ENCODE measurements at regions of chr6 and their contacts with region 1.

Region 1: DNA sequence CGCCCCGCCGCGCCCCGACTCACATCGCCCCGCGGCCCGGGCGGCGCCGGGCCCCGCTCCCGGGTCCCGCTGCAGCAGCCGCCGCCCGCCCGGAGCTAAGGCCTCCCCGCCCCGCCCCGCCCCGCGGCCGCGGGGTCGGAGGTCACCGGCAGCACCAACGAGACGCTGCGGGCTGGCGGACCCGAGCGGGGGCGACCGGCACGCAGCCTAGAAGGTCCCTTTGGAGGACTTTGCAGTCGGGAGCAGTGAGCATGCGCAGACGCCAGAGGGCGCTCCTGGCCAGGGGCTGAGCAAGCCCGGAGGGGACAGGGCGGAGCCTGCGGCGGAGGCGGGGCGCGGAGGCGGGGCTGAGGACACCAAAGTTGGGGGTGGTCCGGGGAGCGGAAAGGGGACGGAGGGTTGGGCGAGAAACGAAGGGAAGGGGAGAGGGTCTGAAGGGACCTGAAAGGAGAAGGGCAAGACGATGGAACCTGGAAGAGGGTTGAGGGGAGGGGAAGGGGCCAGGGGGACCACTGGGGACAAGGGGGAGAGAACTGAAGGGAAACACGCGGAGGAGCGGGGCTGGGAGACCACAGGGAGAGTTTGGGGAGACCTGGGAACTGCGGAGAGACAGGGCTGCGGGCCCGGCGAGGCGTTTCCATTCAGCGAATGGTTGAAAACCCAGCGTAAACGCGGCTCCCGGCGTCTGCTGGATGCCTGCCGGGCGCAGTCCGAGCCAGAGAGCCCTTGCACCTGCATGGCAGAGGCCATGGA is at the start of gene FRS3:
- DNase-seq: peak; percentile 99
- H3K4me3 Mint-ChIP-seq: peak within 1 kb of the TSS; percentile 94
- H3K27ac Mint-ChIP-seq: peak within 1 kb of the TSS; percentile 83
- H3K4me1 Mint-ChIP-seq: peaks cover 19% of the 10 kb centered on the region
- H3K27me3 Mint-ChIP-seq: peaks cover 14% of the 10 kb centered on the region
- total RNA-seq, gene FRS3: 5.2 and 5.3 TPM in 2 replicates

Region 2: DNA sequence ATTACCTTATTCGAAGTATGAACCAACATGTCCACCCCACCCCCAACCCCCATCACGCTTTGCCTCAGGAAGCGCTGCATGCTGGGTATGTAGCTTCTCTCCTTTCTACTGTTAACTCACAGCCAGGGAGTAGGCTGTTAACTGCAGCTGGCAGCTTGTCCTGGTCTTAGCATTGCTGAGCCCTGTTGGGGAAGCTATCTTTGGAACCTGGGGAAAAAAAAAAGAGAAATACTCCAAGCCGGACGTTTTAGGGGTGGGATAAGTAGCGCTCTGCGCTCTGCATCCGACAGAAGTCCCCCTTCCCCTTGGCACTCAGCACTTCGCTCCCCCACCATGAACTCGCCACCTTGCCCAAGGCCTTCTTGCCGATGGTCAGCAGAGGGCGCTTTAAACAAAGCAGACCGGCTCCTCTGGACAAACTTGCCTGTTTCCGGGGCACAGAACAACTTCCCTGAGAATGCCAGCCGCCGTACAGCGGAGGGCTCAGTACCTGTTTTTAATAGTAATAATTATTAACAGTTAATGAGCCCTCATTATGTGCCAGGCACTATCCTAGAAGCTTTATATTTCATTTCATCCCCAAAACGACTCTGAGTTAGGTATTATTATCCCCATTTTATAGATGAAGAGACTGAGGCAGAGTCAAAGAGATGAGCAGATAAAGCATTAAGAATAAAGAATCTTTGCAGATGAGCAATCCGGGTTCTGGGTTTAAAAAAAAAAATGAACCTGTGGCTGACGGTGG is 176.9 kb before region 1 on chr6:
- intact Hi-C with region 1: loop called (anchors 1 kb)
- DNase-seq: peak; percentile 68
- H3K4me3 Mint-ChIP-seq: no peak overlapping the region
- H3K27ac Mint-ChIP-seq: no peak overlapping the region
- H3K4me1 Mint-ChIP-seq: peaks cover 6% of the 10 kb centered on the region
- H3K27me3 Mint-ChIP-seq: peaks cover 7% of the 10 kb centered on the region

Region 3: DNA sequence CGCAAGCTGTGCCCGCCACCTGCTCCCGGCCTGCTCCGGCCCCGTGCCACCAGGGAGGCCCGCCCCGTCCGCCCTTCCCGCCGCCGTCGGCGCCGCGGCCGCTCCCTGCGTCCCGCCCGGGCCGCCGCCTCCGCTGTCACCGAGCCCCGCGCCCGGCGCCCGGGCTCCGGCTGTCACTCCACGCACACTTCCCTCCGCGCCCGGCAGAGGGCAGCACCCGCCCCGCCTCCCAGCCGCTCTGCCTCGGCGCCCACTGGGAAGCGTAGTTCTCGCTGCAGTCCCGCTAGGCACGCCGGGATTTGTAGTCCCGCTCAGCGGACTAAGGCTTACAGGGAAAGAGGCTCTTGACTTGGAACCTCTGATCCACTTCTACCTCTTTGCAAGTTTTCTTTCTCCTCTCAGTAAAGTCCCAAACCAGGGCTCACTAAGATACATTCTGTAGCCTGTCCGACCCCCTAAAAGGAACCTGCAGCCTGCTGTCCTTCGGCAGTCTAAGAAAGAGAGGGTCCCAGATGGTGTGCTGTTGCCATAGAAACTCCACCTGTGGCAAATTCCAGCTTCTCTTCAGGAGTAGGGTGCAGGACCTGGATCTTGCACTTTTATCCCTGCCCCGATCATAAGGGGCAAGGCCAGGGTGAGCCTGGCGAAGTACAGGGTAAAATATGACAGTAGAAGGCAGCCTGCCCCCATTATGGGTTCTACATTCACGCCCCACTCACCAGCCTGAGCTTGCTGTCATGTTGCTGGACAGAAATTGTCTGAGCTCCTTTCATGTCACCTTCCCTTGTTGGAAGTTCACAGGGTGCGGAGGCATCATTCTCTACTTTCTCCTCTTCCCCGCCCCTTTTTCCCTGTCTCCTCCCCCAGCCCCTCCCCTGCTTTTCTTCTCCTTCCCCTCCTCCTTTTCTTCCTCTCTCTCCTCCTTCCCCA is 44.3 kb before region 1 on chr6 and contains the start of gene TFEB:
- intact Hi-C with region 1: loop called (anchors 1 kb)
- DNase-seq: peak; percentile 92
- H3K4me3 Mint-ChIP-seq: peak within 1 kb of the TSS; percentile 80
- H3K27ac Mint-ChIP-seq: peak within 1 kb of the TSS; percentile 31
- H3K4me1 Mint-ChIP-seq: peaks cover 23% of the 10 kb centered on the region
- H3K27me3 Mint-ChIP-seq: no peaks in the 10 kb centered on the region
- total RNA-seq, gene TFEB: 15.6 and 17.2 TPM in 2 replicates

Region 4: DNA sequence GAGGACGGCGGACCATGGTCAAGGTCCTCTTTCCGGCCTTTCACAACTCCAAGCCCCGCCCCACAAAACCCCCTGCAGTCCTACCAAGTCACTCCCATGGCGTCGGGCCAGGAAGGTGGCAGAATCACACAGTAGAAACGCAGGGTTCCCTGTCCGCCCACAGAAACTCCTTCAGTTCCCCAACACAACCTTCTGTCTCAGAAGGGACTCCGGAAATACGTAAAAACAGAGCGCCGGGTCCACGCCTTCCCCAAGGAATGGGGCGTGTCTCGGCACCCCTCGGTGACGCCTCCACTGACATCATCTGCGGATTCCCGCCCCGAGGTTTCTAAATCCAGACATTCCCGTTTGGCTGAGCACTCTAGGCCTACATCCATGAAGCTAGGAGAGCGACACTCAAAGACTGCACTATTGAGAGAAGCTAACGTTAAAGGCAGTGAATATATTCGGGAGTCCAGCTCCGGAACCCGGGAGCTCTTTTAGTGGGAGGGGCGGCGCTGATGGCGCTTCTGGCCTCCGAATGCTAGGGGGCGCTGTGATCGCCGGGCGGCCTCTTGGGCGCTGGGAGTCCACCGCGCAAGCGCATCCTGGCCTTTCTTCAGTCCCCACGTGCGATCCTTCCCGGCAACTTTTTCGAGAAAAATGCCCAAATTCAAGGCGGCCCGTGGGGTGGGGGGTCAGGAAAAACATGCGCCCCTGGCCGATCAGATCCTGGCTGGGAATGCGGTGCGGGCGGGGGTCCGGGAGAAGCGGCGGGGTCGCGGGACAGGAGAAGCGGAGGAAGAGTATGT is 141.1 kb after region 1 on chr6 and contains the starts of genes BYSL and MED20:
- intact Hi-C with region 1: loop called (anchors 1 kb)
- DNase-seq: peak; percentile 89
- H3K4me3 Mint-ChIP-seq: peak within 1 kb of the TSS; percentile 98
- H3K27ac Mint-ChIP-seq: peak within 1 kb of the TSS; percentile 98
- H3K4me1 Mint-ChIP-seq: peaks cover 53% of the 10 kb centered on the region
- H3K27me3 Mint-ChIP-seq: no peaks in the 10 kb centered on the region
- total RNA-seq, gene BYSL: 82.9 and 88.5 TPM in 2 replicates
- total RNA-seq, gene MED20: 19.0 and 23.8 TPM in 2 replicates

Region 5: GRCh38 chr6:42043787-42044475 is 264.0 kb after region 1 on chr6:
- intact Hi-C with region 1: loop called (anchors 1 kb)
- DNase-seq: peak; percentile 87
- H3K4me3 Mint-ChIP-seq: peak overlapping the region; percentile 70
- H3K27ac Mint-ChIP-seq: peak overlapping the region; percentile 83
- H3K4me1 Mint-ChIP-seq: peaks cover 82% of the 10 kb centered on the region
- H3K27me3 Mint-ChIP-seq: no peaks in the 10 kb centered on the region

Region 6: DNA sequence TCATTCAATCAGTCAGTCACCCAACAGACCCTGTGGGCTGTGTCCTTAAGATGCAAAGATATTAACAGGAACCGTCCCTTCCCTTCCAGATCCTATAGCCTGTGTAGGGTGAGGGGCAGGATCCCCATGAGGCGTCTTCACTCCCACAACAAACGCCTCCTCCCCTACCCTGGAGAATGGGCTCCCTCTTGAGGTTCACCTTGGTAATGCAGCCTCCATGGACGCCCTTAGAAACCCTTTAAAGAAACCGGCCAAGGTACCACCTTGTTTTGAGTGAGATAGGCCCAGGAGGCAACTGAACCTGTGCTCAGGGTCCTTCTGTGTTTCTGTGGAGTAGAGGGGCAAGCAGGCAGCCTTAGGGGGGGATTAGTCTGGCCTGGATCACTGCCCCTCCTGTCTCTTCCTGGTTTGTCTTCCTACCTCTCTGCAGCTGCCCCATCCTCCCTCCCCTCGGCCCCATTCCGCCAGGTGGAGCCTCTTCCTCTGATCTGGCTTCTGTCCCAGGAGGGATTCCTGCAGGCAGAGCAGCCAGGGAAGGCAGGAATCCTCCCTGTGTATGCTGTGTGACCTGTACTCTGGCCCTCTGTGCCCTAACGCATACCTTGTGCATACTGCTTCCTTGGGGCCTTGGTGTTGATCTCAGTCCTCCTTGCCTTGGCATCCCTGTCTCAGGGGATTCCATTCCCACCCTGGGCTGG is 386.6 kb after region 1 on chr6:
- intact Hi-C with region 1: loop called (anchors 1 kb)
- DNase-seq: peak; percentile 68
- H3K4me3 Mint-ChIP-seq: no peak overlapping the region
- H3K27ac Mint-ChIP-seq: no peak overlapping the region
- H3K4me1 Mint-ChIP-seq: peaks cover 7% of the 10 kb centered on the region
- H3K27me3 Mint-ChIP-seq: peaks cover 7% of the 10 kb centered on the region

Measured in activated T-helper 1 cell treated with anti-CD3 and anti-CD28 coated beads, Interleukin-12 subunit alpha, Interleukin-12 subunit beta, Interleukin-2, Interleukin-4 antibody, amounts not matched to agents 30 ng/mL and 10 ng/mL and 1 ng/mL, durations not matched to agents 14 hours and 24 hours and 36 hours (primary cell).